Posterior vena cava (tissue), 2 donors: ENCODE measurements at regions of chr2 and their contacts with region 1.

Region 1: GRCh38 chr2:62234755-62235655 is 39.1 kb downstream of the B3GNT2 start:
- DNase-seq: no peak

Region 2: DNA sequence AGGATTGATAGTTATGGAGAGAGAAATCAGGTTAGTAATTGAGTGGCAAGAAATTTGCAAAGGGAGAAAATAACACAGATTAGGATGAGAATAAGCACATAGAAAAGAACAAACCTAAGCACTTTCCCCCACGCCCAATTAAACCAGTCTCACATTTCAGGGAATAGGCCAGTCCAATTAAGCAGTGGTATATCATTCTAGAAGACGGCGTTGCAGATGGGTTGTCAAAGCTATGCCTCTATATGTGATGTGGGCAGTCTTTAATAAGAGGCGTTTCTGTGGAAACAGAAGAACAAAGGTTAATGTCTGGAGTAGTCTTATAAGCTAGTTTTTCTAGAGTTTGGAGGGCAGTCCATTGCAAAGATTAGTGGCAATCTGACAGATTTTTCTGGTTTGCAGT is 22.5 kb after region 1 on chr2:
- intact Hi-C with region 1: loop called in 1 of 2 experiments (anchors 1 kb)
- DNase-seq: no peak